ENCODE measurements at regions of chr16 and their contacts with region 1.

Region 1: GRCh38 chr16:31440516-31441184 is 1.9 kb downstream of the ZNF843 start:
- DNase-seq: no peak
- H3K4me3 Mint-ChIP-seq: no peak overlapping the region
- H3K27ac Mint-ChIP-seq: no peak overlapping the region
- H3K4me1 Mint-ChIP-seq: peaks cover 19% of the 10 kb centered on the region
- H3K27me3 Mint-ChIP-seq: peaks cover 9% of the 10 kb centered on the region

Region 2: GRCh38 chr16:30984669-30985400 is 455.8 kb before region 1 on chr16 and contains the start of gene HSD3B7:
- intact Hi-C with region 1: loop called (anchors 1 kb)
- DNase-seq: peak; percentile 73
- H3K4me3 Mint-ChIP-seq: peak within 1 kb of the TSS; percentile 7
- H3K27ac Mint-ChIP-seq: no peak within 1 kb of the TSS
- H3K4me1 Mint-ChIP-seq: no peaks in the 10 kb centered on the region
- H3K27me3 Mint-ChIP-seq: no peaks in the 10 kb centered on the region
- total RNA-seq, gene HSD3B7: 2.1 and 3.3 TPM in 2 replicates

Region 3: GRCh38 chr16:31117391-31118197 is 323.1 kb before region 1 on chr16 and contains the start of gene KAT8:
- intact Hi-C with region 1: loop called (anchors 5 kb)
- DNase-seq: peak; percentile 95
- H3K4me3 Mint-ChIP-seq: peak within 1 kb of the TSS; percentile 88
- H3K27ac Mint-ChIP-seq: peak within 1 kb of the TSS; percentile 92
- H3K4me1 Mint-ChIP-seq: peaks cover 19% of the 10 kb centered on the region
- H3K27me3 Mint-ChIP-seq: no peaks in the 10 kb centered on the region
- total RNA-seq, gene KAT8: 55.4 and 58.2 TPM in 2 replicates

Region 4: DNA sequence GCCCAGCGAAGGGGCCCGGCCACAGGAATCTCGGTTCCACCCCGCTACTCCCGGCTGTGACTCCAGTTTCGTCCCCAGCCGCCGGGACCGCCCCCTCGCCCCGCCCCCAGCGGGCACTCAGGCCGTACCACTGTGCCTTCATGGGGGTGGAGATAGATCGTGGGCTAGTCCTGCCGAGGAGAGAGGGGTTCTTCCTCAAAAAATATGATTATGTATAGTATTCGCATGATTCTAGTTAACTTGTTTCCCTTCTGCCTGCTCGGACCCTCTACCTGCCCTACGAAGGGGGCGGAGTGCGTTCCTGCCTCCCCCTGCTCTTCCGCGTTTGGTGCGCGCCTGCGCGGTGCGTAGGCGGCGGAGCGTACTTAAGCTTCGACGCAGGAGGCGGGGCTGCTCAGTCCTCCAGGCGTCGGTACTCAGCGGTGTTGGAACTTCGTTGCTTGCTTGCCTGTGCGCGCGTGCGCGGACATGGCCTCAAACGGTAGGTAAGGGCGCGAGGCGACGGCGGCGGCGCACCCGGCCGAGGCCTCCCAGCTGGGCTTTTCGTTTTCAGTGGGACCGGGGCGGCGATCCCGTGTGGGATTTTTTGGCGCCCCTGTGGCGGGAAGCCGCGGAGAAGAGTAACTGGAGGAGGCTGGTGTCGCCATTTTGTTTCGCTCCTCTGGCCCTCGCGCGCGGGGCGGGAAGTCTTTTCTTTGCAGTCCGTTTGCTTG is 260.7 kb before region 1 on chr16 and contains the start of gene FUS:
- intact Hi-C with region 1: loop called (anchors 2 kb)
- DNase-seq: peak; percentile 88
- H3K4me3 Mint-ChIP-seq: peak within 1 kb of the TSS; percentile 98
- H3K27ac Mint-ChIP-seq: peak within 1 kb of the TSS; percentile 99
- H3K4me1 Mint-ChIP-seq: peaks cover 54% of the 10 kb centered on the region
- H3K27me3 Mint-ChIP-seq: no peaks in the 10 kb centered on the region
- total RNA-seq, gene FUS: 950 and 955 TPM in 2 replicates

Region 5: GRCh38 chr16:31215287-31216162 is 225.1 kb before region 1 on chr16:
- intact Hi-C with region 1: loop called (anchors 5 kb)
- DNase-seq: no peak
- H3K4me3 Mint-ChIP-seq: peak overlapping the region; percentile 74
- H3K27ac Mint-ChIP-seq: no peak overlapping the region
- H3K4me1 Mint-ChIP-seq: peaks cover 23% of the 10 kb centered on the region
- H3K27me3 Mint-ChIP-seq: peaks cover 31% of the 10 kb centered on the region

Region 6: DNA sequence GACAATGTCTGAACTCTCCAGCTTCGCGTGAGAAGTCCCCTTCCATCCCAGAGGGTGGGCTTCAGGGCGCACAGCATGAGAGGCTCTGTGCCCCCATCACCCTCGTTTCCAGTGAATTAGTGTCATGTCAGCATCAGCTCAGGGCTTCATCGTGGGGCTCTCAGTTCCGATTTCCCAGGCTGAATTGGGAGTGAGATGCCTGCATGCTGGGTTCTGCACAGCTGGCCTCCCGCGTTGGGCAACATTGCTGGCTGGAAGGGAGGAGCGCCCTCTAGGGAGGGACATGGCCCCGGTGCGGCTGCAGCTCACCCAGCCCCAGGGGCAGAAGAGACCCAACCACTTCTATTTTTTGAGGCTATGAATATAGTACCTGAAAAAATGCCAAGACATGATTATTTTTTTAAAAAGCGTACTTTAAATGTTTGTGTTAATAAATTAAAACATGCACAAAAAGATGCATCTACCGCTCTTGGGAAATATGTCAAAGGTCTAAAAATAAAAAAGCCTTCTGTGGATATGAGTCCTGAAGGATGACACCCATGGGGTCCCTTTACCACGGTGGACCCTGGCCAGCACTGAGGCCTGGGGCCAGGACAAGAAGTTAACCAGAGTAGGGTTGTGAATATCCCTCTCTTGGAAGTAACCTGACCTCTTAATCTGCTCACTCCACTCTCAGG is 58.0 kb before region 1 on chr16:
- intact Hi-C with region 1: loop called (anchors 1 kb)
- DNase-seq: peak; percentile 60
- H3K4me3 Mint-ChIP-seq: no peak overlapping the region
- H3K27ac Mint-ChIP-seq: no peak overlapping the region
- H3K4me1 Mint-ChIP-seq: peaks cover 31% of the 10 kb centered on the region
- H3K27me3 Mint-ChIP-seq: peaks cover 3% of the 10 kb centered on the region